Activated CD8-positive, alpha-beta T cell treated with anti-CD3 and anti-CD28 coated beads for 36 hours (primary cell): ENCODE measurements at regions of chr1 and their contacts with region 1.

Region 1: DNA sequence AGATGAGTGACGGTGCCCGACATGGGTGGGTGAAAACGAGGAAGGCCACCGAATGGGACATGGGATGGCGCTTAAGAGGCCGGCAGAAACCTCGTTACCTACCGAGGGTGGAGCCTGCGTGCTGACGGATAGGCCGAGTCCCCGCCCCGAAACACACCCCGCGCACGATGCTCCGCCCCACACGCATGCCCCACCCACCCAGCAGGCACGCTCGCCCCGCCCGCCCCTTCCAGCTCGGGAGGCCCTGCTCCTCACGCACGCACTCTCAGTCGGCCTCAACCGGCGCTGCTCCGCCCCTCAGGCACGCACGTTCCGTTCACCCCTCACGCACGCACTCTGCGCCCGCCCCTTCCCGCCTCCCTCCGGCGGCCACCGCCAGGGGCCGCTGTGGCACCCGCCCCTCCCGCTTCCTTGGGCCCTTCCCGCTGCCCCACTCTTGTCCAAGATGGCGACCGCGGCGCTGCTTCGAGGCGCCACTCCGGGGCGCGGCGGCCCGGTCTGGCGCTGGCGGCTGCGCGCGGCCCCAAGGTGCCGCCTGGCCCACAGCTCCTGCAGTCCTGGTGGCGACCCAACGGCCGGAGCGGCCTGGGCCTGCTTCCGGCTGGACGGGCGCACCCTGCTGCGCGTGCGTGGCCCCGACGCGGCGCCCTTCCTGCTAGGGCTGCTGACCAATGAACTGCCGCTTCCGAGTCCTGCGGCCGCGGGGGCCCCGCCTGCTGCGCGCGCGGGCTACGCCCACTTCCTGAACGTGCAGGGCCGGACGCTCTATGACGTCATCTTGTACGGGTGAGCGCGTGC is at the start of gene IBA57:
- DNase-seq: peak; percentile 99
- ATAC-seq: peak; percentile 89
- H3K4me3 Mint-ChIP-seq: peak within 1 kb of the TSS; percentile 79
- H3K27ac Mint-ChIP-seq: peak within 1 kb of the TSS; percentile 93
- H3K4me1 Mint-ChIP-seq: peaks cover 41% of the 10 kb centered on the region
- H3K27me3 Mint-ChIP-seq: no peaks in the 10 kb centered on the region
- CTCF ChIP-seq: peak; percentile 57
- total RNA-seq, gene IBA57: 9.7 to 10.8 TPM

Region 2: DNA sequence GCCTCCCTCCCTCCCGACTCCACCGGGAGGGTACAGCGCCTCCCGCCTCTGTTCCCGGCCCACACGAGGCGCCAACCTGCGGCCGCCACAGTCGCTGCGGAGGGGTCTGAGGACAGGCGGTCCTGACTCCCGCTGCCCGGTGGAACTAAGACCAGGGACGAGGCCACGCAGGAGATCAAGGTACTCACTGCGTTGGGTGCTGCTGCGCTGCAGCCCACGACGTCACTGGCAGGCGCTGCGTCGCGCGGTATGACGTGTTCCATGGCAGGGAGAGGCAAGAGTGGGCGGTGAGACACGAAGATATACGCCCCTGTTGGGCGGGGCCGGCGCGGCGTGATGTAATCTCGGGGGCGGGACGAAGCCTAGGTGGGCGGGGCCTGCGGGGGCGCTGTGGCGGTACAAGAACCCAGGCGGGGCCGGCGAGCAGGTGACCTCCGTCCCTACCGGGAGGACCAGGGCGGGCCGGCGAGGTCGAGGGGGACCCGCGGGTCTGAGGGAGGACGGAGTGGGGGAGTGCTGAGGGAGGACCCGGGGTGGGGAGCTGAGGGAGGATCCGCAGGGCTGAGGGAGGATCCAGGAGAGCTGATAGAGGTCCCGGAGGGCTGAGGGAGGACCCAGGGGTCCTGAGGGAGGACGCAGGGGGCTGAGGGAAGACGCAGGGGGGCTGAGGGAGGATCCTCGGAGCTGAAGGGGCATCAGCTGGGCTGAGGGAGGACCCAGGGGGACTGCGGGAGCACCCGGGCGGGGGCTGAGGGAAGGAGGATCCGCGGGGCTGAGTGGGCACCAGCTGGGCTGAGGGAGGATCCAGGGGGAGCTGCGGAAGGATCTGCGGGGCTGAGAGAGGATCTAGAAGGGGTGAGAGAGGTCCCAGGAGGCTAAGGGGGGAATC is 56.3 kb before region 1 on chr1 and contains the start of gene MRPL55:
- CTCF ChIA-PET with region 1: no interaction called
- POLR2A ChIA-PET with region 1: interaction called, 5 read pairs
- intact Hi-C with region 1: loop called (anchors 1 kb)
- DNase-seq: peak; percentile 99
- ATAC-seq: peak; percentile 93
- H3K4me3 Mint-ChIP-seq: peak within 1 kb of the TSS; percentile 83
- H3K27ac Mint-ChIP-seq: peak within 1 kb of the TSS; percentile 90
- H3K4me1 Mint-ChIP-seq: peaks cover 31% of the 10 kb centered on the region
- H3K27me3 Mint-ChIP-seq: no peaks in the 10 kb centered on the region
- CTCF ChIP-seq: no peak
- total RNA-seq, gene MRPL55: 67.8 to 68.3 TPM

Region 3: GRCh38 chr1:228131766-228132165 is 33.8 kb before region 1 on chr1:
- CTCF ChIA-PET with region 1: interaction called, 47 read pairs
- POLR2A ChIA-PET with region 1: interaction called, 3 read pairs
- intact Hi-C with region 1: no loop called
- DNase-seq: no peak
- ATAC-seq: no peak
- H3K4me3 Mint-ChIP-seq: no peak overlapping the region
- H3K27ac Mint-ChIP-seq: no peak overlapping the region
- H3K4me1 Mint-ChIP-seq: peaks cover 9% of the 10 kb centered on the region
- H3K27me3 Mint-ChIP-seq: peaks cover 6% of the 10 kb centered on the region
- CTCF ChIP-seq: no peak

Region 4: DNA sequence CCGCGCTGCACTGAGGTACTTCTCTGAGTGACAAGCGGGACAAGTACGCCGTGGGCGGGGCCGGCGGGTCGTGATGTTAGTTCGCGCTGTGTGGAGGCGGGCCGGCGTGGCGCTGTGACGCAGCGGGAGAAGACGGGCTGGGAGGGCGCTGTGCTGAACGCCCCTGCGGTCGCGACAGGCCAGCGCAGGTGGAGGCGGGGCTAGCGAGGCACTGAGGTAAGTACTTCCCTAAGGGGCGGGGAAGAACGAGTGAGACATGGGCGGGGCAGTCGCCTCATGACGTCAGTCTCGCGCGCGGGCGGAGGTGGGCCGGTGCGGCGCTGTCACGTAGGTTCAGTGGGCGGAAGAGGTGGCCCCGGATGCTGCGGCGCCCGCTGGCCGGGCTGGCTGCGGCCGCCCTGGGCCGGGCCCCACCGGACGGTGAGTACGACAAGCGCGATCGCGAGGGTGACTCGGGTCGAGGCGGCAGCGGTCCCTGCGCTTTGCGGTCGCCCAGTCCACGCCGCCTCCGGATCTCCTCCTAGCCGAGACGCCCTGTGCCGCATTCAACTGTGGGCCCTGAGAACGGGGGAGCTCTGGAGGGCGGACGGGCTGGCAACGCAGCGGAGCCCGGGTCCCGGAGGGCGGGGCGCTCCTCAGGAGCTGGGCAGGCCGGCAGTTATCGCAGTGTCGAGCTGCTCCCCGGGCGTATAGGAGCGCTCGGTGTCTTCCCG is 25.5 kb before region 1 on chr1 and contains the start of gene GUK1:
- CTCF ChIA-PET with region 1: interaction called, 44 read pairs
- POLR2A ChIA-PET with region 1: interaction called, 59 read pairs
- intact Hi-C with region 1: loop called (anchors 1 kb)
- DNase-seq: peak; percentile 100
- ATAC-seq: peak; percentile 95
- H3K4me3 Mint-ChIP-seq: peak within 1 kb of the TSS; percentile 99
- H3K27ac Mint-ChIP-seq: peak within 1 kb of the TSS; percentile 99
- H3K4me1 Mint-ChIP-seq: peaks cover 42% of the 10 kb centered on the region
- H3K27me3 Mint-ChIP-seq: no peaks in the 10 kb centered on the region
- CTCF ChIP-seq: no peak
- total RNA-seq, gene GUK1: 375 to 376 TPM

Region 5: DNA sequence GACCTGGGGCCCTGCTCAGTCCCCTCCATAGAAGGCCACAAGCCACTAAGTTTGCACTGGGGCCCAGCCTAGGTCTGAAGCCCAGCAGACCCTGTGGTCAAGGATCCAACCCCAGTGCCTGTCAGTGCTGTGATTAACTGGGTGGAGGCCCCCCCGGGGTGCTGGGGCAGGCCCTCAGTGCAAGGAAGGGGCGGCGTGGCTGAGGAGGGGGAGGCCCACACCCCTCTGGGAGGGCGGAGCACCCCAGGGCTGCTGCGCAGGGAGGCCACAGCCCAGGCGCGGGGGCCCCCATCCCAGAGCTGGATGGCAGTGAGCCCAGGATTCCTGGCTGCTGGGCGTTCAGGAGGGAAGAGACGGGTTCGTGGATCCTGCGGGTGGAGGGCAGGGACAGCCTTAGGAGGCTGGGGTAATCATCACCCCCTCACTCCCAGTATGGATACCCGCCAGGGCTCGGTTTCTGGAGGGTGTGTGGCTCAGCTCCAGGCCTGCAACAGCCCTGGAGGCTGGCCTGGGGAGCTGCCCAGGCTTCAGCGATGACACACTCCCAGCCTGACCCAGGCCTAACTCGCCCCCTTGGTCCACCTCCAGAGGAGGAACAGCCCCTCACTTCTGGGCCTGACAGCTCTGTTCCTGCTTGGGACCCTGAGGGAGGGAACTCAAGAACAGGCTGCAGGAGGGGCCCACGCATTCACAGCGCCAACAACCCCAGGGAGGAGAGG is 15.0 kb before region 1 on chr1:
- CTCF ChIA-PET with region 1: interaction called, 15 read pairs
- POLR2A ChIA-PET with region 1: interaction called, 4 read pairs
- intact Hi-C with region 1: no loop called
- DNase-seq: peak; percentile 2
- ATAC-seq: no peak
- H3K4me3 Mint-ChIP-seq: no peak overlapping the region
- H3K27ac Mint-ChIP-seq: no peak overlapping the region
- H3K4me1 Mint-ChIP-seq: peaks cover 19% of the 10 kb centered on the region
- H3K27me3 Mint-ChIP-seq: no peaks in the 10 kb centered on the region
- CTCF ChIP-seq: no peak

Region 6: DNA sequence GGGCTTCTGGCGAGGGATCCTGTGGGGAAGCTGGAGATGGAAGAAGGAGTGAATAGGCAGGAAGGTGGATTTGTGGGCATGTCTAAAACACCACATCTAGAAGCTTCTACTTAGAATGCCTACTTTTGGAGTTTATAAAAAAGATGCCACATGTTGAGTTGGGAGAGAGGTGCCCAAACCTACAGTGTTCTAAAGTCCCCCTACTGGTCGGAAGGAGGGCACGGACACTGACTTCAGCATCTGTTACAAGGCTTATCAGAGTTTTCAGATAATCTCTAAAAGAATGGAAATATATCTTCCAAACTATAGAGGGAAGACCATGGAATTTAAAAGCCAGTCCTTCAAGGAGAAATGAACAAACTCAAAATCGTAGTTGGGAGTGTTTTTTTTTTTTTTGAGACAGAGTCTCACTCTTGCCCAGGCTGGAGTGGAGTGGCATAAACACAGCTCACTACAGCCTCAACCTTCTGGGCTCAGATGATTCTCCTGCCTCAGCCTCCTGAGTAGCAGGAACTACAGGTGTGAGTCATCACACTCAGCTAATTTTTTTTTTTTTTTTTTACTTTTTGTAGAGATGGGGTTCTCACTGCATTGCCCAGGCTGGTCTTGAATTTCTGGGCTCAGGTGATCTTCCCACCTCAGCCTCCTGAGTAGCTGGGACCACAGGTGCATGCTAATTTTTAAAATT is 14.8 kb after region 1 on chr1:
- CTCF ChIA-PET with region 1: interaction called, 28 read pairs
- POLR2A ChIA-PET with region 1: interaction called, 6 read pairs
- intact Hi-C with region 1: no loop called
- DNase-seq: no peak
- ATAC-seq: peak; percentile 47
- H3K4me3 Mint-ChIP-seq: no peak overlapping the region
- H3K27ac Mint-ChIP-seq: no peak overlapping the region
- H3K4me1 Mint-ChIP-seq: peaks cover 2% of the 10 kb centered on the region
- H3K27me3 Mint-ChIP-seq: no peaks in the 10 kb centered on the region
- CTCF ChIP-seq: peak; percentile 24

Region 7: GRCh38 chr1:228332797-228333738 is 167.5 kb after region 1 on chr1:
- CTCF ChIA-PET with region 1: no interaction called
- POLR2A ChIA-PET with region 1: no interaction called
- intact Hi-C with region 1: no loop called
- DNase-seq: no peak
- ATAC-seq: no peak
- H3K4me3 Mint-ChIP-seq: no peak overlapping the region
- H3K27ac Mint-ChIP-seq: no peak overlapping the region
- H3K4me1 Mint-ChIP-seq: no peaks in the 10 kb centered on the region
- H3K27me3 Mint-ChIP-seq: no peaks in the 10 kb centered on the region
- CTCF ChIP-seq: no peak